Heart left ventricle (tissue), 16 donors: ENCODE measurements at regions of chr15 and their contacts with region 1.

Region 1: DNA sequence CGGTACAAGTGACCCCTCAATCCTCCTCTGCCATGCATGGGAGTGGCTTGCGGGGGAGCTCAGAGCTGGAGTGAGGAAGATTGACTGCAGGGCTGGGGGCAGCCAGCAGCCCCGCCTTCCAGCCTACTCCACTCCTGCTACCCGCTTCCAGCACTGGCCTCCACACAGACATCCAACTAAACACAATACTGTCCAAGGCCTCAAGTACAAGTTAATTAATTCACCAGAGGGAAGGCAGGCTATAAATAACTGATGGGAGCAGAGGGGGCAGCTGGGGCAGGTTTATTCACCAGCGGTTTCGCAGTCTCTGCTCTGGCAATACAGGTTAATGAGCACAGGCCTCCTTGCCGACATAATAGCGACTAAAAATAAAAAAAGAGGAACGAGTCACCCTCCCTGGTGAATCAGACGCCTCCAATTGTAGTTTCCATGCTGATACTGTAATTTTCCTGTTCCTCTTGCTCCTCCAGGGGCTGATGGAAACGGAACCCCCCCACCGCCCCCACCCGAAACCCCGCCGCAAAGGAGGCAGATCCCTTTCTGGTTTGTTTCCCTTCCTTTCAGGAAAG is 166.4 kb upstream of the TLE3 start:
- DNase-seq: peak in 2 of 5 donors; percentile 29 to 36
- ATAC-seq: peak in 3 of 4 donors; percentile 46 to 59 (median 48)
- H3K4me3 ChIP-seq: peak overlapping the region in 1 of 12 donors; percentile 9
- H3K27ac ChIP-seq: peak overlapping the region in 5 of 12 donors; percentile 3 to 75 (median 30)
- H3K4me1 ChIP-seq: peaks cover 4 to 88% (median 42%) of the 10 kb centered on the region in 12 donors
- H3K27me3 ChIP-seq: no peaks in the 10 kb centered on the region
- CTCF ChIP-seq: no peak
- POLR2A ChIP-seq: no peak

Region 2: GRCh38 chr15:70091726-70092463 is 172.2 kb before region 1 on chr15:
- intact Hi-C with region 1: loop called in 4 of 10 experiments (anchors 5 kb)
- DNase-seq: peak in 1 of 5 donors; percentile 12
- ATAC-seq: no peak
- H3K4me3 ChIP-seq: peak overlapping the region in 1 of 12 donors; percentile 91
- H3K27ac ChIP-seq: peak overlapping the region in 1 of 12 donors; percentile 32
- H3K4me1 ChIP-seq: peaks cover 2 to 87% (median 64%) of the 10 kb centered on the region in 12 donors
- H3K27me3 ChIP-seq: peaks cover 0 to 7% (median 0%) of the 10 kb centered on the region in 9 donors
- CTCF ChIP-seq: no peak
- POLR2A ChIP-seq: no peak

Region 3: DNA sequence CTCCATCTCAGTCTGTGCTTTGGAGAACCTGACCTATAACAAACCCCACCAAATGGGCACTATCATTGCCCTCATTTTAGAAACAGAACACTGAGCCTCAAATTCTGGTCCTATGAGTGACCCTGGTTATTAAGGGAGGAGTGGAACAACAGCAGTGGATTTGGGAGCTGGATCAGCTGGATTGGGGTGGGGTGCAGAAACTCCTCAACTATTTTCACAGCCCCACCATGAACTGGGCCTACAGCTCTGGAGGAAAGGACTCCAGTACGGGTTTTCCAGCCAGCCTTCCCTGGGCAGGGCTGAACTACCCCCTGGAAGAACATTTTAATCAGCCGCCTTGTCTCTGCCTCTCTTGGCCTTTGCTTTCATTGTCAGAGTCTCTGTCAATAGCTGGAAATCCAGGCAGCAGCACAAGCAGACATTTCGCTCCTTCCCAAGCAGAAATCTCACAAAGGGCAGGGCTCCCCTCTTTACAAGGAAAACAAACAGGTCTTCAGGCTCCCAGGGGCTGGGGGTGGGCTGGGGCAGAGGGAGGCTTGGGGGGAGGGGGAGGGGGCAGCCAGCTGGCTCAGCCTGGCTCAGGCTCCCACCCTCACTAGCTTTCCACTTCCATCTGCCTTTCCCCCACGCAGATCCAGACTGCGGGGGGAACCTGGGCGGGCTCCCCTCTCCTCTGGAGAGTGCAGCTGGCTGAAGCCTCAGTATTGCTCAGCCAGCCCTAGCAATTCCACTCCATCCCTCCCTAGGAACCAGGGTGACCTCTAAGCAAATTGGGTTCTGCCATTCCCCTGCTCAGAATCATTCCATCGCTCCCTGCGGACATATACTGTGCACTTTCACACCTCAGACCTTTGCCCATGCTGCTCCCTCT is 152.7 kb before region 1 on chr15:
- intact Hi-C with region 1: loop called in 3 of 10 experiments (anchors 5 to 10 kb)
- DNase-seq: peak; percentile 67 to 84 (median 81)
- ATAC-seq: peak; percentile 92 to 97 (median 96)
- H3K4me3 ChIP-seq: peak overlapping the region in 9 of 12 donors; percentile 17 to 42 (median 36)
- H3K27ac ChIP-seq: peak overlapping the region; percentile 72 to 93 (median 87)
- H3K4me1 ChIP-seq: peaks cover 0 to 39% (median 13%) of the 10 kb centered on the region in 12 donors
- H3K27me3 ChIP-seq: no peaks in the 10 kb centered on the region
- CTCF ChIP-seq: no peak
- POLR2A ChIP-seq: no peak

Region 4: GRCh38 chr15:70121624-70122297 is 142.3 kb before region 1 on chr15:
- intact Hi-C with region 1: loop called in 1 of 10 experiments (anchors 10 kb)
- DNase-seq: peak in 4 of 5 donors; percentile 36 to 64 (median 48)
- ATAC-seq: peak; percentile 45 to 84 (median 65)
- H3K4me3 ChIP-seq: no peak overlapping the region
- H3K27ac ChIP-seq: peak overlapping the region in 4 of 12 donors; percentile 10 to 43 (median 23)
- H3K4me1 ChIP-seq: peaks cover 0 to 23% (median 8%) of the 10 kb centered on the region in 12 donors
- H3K27me3 ChIP-seq: peaks cover 0 to 8% (median 0%) of the 10 kb centered on the region in 9 donors
- CTCF ChIP-seq: no peak
- POLR2A ChIP-seq: no peak

Region 5: GRCh38 chr15:70466895-70467529 is 202.9 kb after region 1 on chr15:
- intact Hi-C with region 1: loop called in 1 of 10 experiments (anchors 10 kb)
- DNase-seq: peak in 4 of 5 donors; percentile 33 to 68 (median 41)
- ATAC-seq: peak; percentile 62 to 84 (median 74)
- H3K4me3 ChIP-seq: no peak overlapping the region
- H3K27ac ChIP-seq: no peak overlapping the region
- H3K4me1 ChIP-seq: peaks cover 0 to 15% (median 0%) of the 10 kb centered on the region in 12 donors
- H3K27me3 ChIP-seq: peaks cover 0 to 23% (median 2%) of the 10 kb centered on the region in 9 donors
- CTCF ChIP-seq: peak; percentile 39 to 71 (median 50)
- POLR2A ChIP-seq: no peak

Region 6: DNA sequence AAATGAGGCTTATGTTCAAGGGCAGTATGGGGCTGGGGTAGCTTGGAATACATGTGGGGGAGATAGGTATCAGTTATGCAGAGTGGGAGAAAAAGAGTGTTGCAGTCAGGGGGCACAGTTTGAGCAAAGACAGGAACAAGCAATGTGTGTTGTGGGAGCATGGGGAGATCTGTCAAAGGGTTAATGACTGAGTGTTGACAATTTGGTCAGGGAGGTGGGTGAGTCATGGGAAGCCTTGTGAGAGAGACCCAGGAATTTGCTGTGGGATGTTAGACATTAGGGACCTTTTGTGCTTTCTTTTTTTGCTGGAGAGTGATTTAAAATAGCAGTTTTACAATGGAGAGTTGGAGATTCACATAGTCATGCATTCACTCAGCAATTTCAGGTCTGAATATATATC is 1324.6 kb after region 1 on chr15:
- intact Hi-C with region 1: no loop called
- DNase-seq: no peak
- ATAC-seq: no peak
- H3K4me3 ChIP-seq: no peak overlapping the region
- H3K27ac ChIP-seq: no peak overlapping the region
- H3K4me1 ChIP-seq: peaks cover 0 to 20% (median 2%) of the 10 kb centered on the region in 12 donors
- H3K27me3 ChIP-seq: no peaks in the 10 kb centered on the region
- CTCF ChIP-seq: no peak
- POLR2A ChIP-seq: no peak